A549 (cell line): ENCODE measurements at regions of chr4 and their contacts with region 1.

Region 1: GRCh38 chr4:83034630-83035494 is at the start of gene COPS4:
- DNase-seq: peak; percentile 87 to 99
- ATAC-seq: peak; percentile 99
- H3K4me3 ChIP-seq: peak within 1 kb of the TSS; percentile 64
- H3K27ac ChIP-seq: peak within 1 kb of the TSS; percentile 85 to 96
- H3K4me1 ChIP-seq: peaks cover 5% of the 10 kb centered on the region; the same call in 2 of the 3 replicates
- CTCF ChIP-seq: no peak
- EP300 ChIP-seq: 0 out of 5 replicates have a peak, but pooled peaks of 1 of the 2 experiments have one; percentile 22
- POLR2A ChIP-seq: peak; percentile 58
- RAD21 ChIP-seq: peak in 1 of 2 experiments; percentile 20
- polyA plus RNA-seq, gene COPS4: 35.5 and 36.5 TPM in 2 replicates

Region 2: DNA sequence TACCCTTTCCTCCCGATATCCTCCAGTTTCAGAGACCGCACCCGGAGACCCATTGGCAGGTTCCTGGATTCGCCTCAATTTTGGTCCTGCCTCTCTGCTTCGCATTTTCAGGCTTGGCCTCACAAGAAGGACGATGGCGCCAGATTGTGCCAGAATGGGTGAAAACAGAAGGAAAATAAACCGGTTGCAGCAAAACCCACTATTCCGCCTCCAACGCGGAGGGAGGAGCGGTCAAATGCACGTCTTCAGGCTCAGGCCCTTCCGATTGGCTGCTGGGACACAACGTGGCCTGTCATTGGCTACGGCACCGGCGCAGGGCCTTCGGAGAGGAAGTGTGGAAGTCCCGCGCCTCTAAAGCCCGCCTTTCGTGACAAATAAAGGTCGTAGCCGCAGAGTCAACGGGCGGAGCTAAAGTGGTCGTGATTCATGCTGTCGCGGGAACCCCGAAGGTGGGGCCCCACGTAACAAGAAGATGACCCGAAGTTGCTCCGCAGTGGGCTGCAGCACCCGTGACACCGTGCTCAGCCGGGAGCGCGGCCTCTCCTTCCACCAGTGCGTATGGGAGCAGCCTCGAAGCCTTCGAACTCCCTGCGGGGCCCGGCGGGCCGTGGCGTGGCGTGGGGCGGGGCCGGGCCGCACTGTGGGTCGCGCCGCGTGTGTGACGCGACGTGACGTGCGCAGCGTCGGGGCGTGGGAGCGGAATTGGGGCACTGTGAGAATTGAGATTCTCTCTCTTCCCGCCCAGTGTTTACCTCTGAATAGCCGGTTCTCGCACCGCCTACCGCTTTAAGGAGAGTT is 134.3 kb before region 1 on chr4 and contains the start of gene THAP9:
- CTCF ChIA-PET with region 1: no interaction called
- POLR2A ChIA-PET with region 1: interaction called, 20 read pairs
- DNase-seq: peak; percentile 88 to 99
- ATAC-seq: peak; percentile 95 to 98
- H3K4me3 ChIP-seq: peak within 1 kb of the TSS; percentile 75
- H3K27ac ChIP-seq: peak within 1 kb of the TSS; percentile 94 to 97
- H3K4me1 ChIP-seq: peaks cover 28% of the 10 kb centered on the region; the same call in 2 of the 3 replicates
- CTCF ChIP-seq: no peak
- EP300 ChIP-seq: no peak
- POLR2A ChIP-seq: peak; percentile 57
- RAD21 ChIP-seq: no peak
- polyA plus RNA-seq, gene THAP9: 4.4 and 5.3 TPM in 2 replicates

Region 3: GRCh38 chr4:83012687-83013419 is 22.0 kb before region 1 on chr4:
- CTCF ChIA-PET with region 1: interaction called, 3 read pairs
- POLR2A ChIA-PET with region 1: interaction called, 40 read pairs
- DNase-seq: peak; percentile 79 to 97
- ATAC-seq: peak; percentile 83 to 90
- H3K4me3 ChIP-seq: peak overlapping the region; percentile 80
- H3K27ac ChIP-seq: peak overlapping the region; percentile 84 to 96
- H3K4me1 ChIP-seq: peaks cover 23% of the 10 kb centered on the region
- CTCF ChIP-seq: no peak; the same call in 2 of the 3 replicates
- EP300 ChIP-seq: no peak
- POLR2A ChIP-seq: peak; percentile 69
- RAD21 ChIP-seq: peak in 1 of 2 experiments; percentile 34; a peak in 2 of 5 replicates